Activated CD8-positive, alpha-beta T cell treated with anti-CD3 and anti-CD28 coated beads for 36 hours (primary cell): ENCODE measurements at regions of chr11 and their contacts with region 1.

Region 1: DNA sequence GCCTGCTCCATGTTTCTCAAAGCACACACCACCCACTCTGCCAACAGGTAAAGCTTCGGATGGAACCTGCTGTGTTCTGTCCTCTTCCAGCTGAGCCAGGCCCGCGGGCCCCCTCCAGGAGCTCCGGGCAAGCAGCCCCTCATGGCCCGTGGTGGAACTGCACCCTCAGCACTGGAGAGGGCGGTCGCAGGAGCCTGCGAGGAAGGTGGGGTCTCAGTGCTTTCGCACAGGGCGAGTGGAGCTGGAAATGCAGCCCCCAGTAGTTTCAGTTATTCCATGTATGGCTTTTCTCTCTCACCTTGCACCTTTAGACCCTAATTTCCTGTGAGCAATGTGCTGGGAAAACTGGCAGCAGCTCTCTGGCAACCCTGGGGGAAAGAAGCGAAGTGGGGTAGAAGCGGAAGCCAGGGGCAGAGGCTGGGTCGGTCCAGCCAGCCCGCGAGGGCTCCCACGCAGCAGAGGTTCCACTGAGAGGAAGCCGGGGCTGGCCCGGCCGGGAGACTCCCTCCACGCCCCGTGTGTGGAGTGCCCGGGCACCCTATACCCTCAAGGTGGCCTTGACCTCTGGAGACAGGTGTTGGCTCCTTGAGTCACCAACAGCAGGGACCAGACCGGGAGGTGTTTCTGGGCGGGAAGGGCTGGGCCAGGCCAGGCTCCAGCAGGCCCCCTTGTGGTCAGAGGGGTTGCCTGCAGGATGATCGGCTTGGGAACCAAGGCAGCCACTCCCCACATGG is 119.9 kb upstream of the TMEM45B start:
- DNase-seq: peak; percentile 80
- ATAC-seq: peak; percentile 96
- H3K4me3 Mint-ChIP-seq: peak overlapping the region; percentile 71
- H3K27ac Mint-ChIP-seq: no peak overlapping the region
- H3K4me1 Mint-ChIP-seq: peaks cover 3% of the 10 kb centered on the region
- H3K27me3 Mint-ChIP-seq: peaks cover 2% of the 10 kb centered on the region
- CTCF ChIP-seq: peak; percentile 56

Region 2: DNA sequence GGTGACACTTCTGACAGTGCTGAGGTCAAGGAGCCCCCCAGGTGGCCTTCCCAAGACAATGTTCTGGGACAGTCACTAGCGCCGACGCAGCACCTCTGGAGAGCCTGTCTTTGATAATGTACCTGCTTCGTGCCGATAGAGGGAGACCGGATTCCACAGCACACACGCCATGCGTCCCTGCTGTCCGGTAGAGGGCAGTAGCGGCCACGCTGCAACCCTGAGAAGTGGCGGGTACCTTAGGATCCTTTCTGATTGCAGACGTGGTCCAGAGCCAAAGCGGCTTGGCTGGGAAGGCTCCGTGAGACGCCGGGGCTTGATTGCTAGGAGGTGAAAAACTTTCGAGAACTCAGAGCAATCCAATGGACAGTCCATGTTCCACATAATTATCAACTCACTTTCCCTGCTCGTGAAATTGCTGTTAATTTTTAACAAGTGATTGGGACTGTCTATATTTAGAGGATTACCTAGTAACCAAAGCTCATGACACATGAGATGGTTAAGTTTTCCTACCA is 331.5 kb before region 1 on chr11:
- CTCF ChIA-PET with region 1: interaction called, 7 read pairs
- POLR2A ChIA-PET with region 1: no interaction called
- intact Hi-C with region 1: loop called (anchors 5 kb)
- DNase-seq: peak; percentile 85
- ATAC-seq: peak; percentile 100
- H3K4me3 Mint-ChIP-seq: no peak overlapping the region
- H3K27ac Mint-ChIP-seq: no peak overlapping the region
- H3K4me1 Mint-ChIP-seq: no peaks in the 10 kb centered on the region
- H3K27me3 Mint-ChIP-seq: peaks cover 31% of the 10 kb centered on the region
- CTCF ChIP-seq: peak; percentile 99

Region 3: GRCh38 chr11:129375751-129376657 is 319.7 kb before region 1 on chr11 and contains the start of gene BARX2:
- CTCF ChIA-PET with region 1: interaction called, 10 read pairs
- POLR2A ChIA-PET with region 1: no interaction called
- intact Hi-C with region 1: no loop called
- DNase-seq: peak; percentile 53
- ATAC-seq: peak; percentile 65
- H3K4me3 Mint-ChIP-seq: peak within 1 kb of the TSS; percentile 54
- H3K27ac Mint-ChIP-seq: no peak within 1 kb of the TSS
- H3K4me1 Mint-ChIP-seq: peaks cover 25% of the 10 kb centered on the region
- H3K27me3 Mint-ChIP-seq: peaks cover 68% of the 10 kb centered on the region
- CTCF ChIP-seq: no peak
- total RNA-seq, gene BARX2: not detected

Region 4: GRCh38 chr11:129681344-129682114 is 14.2 kb before region 1 on chr11:
- CTCF ChIA-PET with region 1: interaction called, 17 read pairs
- POLR2A ChIA-PET with region 1: no interaction called
- intact Hi-C with region 1: no loop called
- DNase-seq: no peak
- ATAC-seq: no peak
- H3K4me3 Mint-ChIP-seq: no peak overlapping the region
- H3K27ac Mint-ChIP-seq: no peak overlapping the region
- H3K4me1 Mint-ChIP-seq: no peaks in the 10 kb centered on the region
- H3K27me3 Mint-ChIP-seq: peaks cover 7% of the 10 kb centered on the region
- CTCF ChIP-seq: no peak

Region 5: DNA sequence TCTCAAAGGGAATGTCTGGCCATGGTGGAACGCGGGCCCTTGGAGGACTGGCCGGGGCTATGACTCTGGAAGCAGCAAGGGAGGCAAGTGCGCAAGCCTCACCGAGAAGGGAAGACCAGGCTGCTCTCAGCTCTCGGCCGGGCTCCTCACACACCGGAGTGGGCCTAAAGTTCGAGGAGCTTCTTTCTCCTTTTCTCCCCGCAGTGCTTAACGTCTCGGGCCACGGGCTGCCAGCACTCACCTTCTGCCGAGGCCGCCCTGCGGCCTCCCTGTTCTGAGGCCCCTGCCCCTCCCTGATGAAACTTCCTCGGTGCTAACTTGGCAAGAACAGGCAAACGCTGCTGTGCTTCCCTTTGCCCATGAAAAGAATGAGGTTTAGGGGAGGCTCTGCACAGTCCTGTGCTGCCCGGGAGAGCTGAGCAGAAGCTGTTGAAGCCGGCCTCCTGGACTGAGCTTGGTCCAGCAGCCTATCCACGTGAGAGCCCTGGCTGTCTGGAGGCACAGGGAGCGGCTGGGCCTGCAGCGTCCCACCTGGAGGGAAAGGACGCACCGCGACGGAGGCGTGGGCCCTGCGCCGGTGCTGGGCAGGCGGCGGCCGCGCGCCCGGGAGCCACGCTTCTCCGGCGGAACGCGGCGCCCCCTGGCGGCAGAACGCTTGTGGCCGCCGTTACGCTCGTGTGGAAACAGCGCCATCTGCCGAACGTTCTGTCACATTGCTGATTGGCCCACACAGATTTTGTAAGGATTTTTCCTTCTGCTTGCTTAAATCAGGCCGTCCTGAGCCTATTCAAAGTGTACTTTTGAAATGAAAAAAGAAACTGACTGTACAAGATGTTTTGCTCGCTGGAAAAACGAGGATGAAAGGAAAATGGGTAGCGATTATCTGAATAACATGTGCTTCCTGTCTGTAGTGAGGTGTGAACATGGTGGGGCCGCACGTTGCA is 54.9 kb after region 1 on chr11:
- CTCF ChIA-PET with region 1: interaction called, 19 read pairs
- POLR2A ChIA-PET with region 1: no interaction called
- intact Hi-C with region 1: no loop called
- DNase-seq: peak; percentile 75
- ATAC-seq: peak; percentile 93
- H3K4me3 Mint-ChIP-seq: no peak overlapping the region
- H3K27ac Mint-ChIP-seq: no peak overlapping the region
- H3K4me1 Mint-ChIP-seq: peaks cover 2% of the 10 kb centered on the region
- H3K27me3 Mint-ChIP-seq: peaks cover 5% of the 10 kb centered on the region
- CTCF ChIP-seq: peak; percentile 99